CD4-positive, alpha-beta memory T cell (primary cell): ENCODE measurements at regions of chr2 and their contacts with region 1.

Region 1: DNA sequence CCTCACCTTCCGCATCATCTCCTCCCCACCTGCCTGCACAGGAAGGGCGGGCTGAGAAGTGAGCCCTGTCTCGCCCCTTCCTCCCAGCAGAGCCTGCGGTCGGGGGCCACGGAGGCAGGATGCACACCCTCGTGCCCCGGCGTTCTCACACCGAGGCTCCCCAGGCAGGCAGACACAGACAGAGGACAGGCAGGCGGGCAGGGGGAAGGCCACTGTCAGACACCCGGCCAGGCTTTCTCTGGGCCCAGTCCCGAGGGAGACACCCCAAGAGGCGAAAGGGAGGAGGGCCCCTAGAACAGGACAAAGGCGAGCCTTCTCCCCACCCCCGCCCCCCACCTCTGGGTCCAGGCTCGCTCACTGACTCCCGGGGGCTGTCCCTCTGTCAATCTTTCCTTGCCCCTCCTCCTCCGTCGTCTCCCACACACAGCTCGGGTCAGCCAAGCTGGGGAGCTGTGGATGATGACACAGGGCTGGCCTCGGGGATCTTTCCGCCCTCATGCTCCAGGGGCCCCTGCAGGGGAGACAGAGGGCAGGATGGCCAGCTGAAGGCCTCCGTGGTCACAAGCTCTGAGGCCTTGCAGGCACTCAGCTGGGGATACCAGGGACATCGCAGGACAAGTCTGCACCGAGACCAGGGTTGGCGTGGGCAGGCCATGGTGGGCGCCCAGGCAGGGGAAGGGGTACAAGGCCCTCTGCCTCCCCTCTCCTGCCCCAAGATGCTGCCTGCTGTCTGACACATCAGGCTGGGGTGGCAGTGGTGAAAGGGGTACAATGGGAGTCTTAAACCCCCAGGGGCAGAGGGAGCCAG is 24.9 kb downstream of the BIN1 start:
- DNase-seq: peak; percentile 81 to 86 (median 83)
- H3K4me3 ChIP-seq: peak overlapping the region; percentile 91
- H3K4me3 Mint-ChIP-seq: peak overlapping the region; percentile 92 to 96 (median 94)
- H3K27ac ChIP-seq: peak overlapping the region; percentile 83
- H3K27ac Mint-ChIP-seq: peak overlapping the region; percentile 96 to 98 (median 97)
- H3K4me1 ChIP-seq: peaks cover 81% of the 10 kb centered on the region
- H3K4me1 Mint-ChIP-seq: peaks cover 47 to 88% (median 69%) of the 10 kb centered on the region in 4 donors
- H3K27me3 ChIP-seq: no peaks in the 10 kb centered on the region
- H3K27me3 Mint-ChIP-seq: no peaks in the 10 kb centered on the region

Region 2: GRCh38 chr2:127007652-127008051 is 74.4 kb before region 1 on chr2:
- CTCF ChIA-PET with region 1: no interaction called
- POLR2A ChIA-PET with region 1: no interaction called
- intact Hi-C with region 1: no loop called
- DNase-seq: no peak
- H3K4me3 ChIP-seq: no peak overlapping the region
- H3K4me3 Mint-ChIP-seq: no peak overlapping the region
- H3K27ac ChIP-seq: no peak overlapping the region
- H3K27ac Mint-ChIP-seq: no peak overlapping the region
- H3K4me1 ChIP-seq: no peaks in the 10 kb centered on the region
- H3K4me1 Mint-ChIP-seq: no peaks in the 10 kb centered on the region
- H3K27me3 ChIP-seq: no peaks in the 10 kb centered on the region
- H3K27me3 Mint-ChIP-seq: peaks cover 16 to 25% of the 10 kb centered on the region in 2 donors

Region 3: GRCh38 chr2:127025359-127026166 is 56.5 kb before region 1 on chr2:
- CTCF ChIA-PET with region 1: no interaction called
- POLR2A ChIA-PET with region 1: no interaction called
- intact Hi-C with region 1: loop called (anchors 2 kb)
- DNase-seq: peak; percentile 70 to 85 (median 74)
- H3K4me3 ChIP-seq: peak overlapping the region; percentile 24 to 64
- H3K4me3 Mint-ChIP-seq: peak overlapping the region; percentile 89 to 99 (median 92)
- H3K27ac ChIP-seq: no peak overlapping the region
- H3K27ac Mint-ChIP-seq: peak overlapping the region in 6 of 7 donors; percentile 13 to 85 (median 71)
- H3K4me1 ChIP-seq: peaks cover 14% of the 10 kb centered on the region
- H3K4me1 Mint-ChIP-seq: peaks cover 8 to 22% (median 14%) of the 10 kb centered on the region in 4 donors
- H3K27me3 ChIP-seq: peaks cover 6% of the 10 kb centered on the region
- H3K27me3 Mint-ChIP-seq: peaks cover 3 to 16% of the 10 kb centered on the region in 2 donors

Region 4: GRCh38 chr2:127037476-127037875 is 44.6 kb before region 1 on chr2:
- CTCF ChIA-PET with region 1: no interaction called
- POLR2A ChIA-PET with region 1: no interaction called
- intact Hi-C with region 1: no loop called
- DNase-seq: no peak
- H3K4me3 ChIP-seq: no peak overlapping the region
- H3K4me3 Mint-ChIP-seq: no peak overlapping the region
- H3K27ac ChIP-seq: no peak overlapping the region
- H3K27ac Mint-ChIP-seq: no peak overlapping the region
- H3K4me1 ChIP-seq: no peaks in the 10 kb centered on the region
- H3K4me1 Mint-ChIP-seq: peaks cover 0 to 5% (median 0%) of the 10 kb centered on the region in 4 donors
- H3K27me3 ChIP-seq: no peaks in the 10 kb centered on the region
- H3K27me3 Mint-ChIP-seq: peaks cover 0 to 2% of the 10 kb centered on the region in 2 donors

Region 5: DNA sequence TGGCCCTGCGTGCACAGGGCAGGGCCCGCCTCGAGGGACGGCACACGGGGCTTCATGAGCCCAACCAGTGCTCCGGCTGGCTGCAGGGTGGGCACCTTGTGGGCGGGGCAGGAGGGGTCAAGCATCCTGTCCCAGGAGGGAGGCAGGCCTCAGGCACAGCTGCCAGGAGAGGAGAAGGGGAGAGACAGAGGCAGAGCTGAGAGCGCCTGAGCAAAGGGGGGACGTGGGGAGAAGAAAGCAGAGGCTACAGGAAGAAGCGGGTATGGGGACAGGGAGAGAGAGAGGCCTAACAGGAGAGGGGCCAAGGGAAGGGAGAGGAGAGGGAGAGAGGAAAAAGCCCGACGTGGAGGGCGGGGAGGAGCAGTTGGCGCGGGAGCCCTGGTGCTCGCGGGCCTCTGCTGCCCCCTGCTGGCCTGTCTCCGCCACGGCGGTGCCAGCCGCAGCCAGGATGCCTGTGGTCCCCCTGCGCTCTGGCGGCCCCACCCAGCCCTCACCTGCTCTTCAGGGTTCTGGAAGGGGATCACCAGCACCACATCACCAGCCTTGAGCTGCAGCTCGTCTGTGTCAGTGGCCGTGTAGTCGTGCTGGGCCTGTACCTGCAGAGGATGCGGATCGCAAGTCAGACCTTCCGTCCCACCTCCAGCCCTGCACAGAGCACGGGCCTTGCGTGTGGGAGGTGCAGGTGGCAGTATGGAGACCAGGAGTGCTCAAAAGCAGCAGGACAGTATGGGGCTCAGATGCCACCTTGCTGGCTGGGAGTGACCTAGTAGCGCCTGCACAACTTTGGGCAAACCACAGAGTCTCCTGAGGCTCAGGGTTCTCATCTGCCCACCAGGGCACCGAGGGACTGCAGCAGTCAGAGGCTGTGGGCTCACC is 31.9 kb before region 1 on chr2:
- CTCF ChIA-PET with region 1: interaction called, 10 read pairs
- POLR2A ChIA-PET with region 1: interaction called, 3 read pairs
- intact Hi-C with region 1: no loop called
- DNase-seq: peak; percentile 51 to 66 (median 59)
- H3K4me3 ChIP-seq: no peak overlapping the region
- H3K4me3 Mint-ChIP-seq: no peak overlapping the region
- H3K27ac ChIP-seq: no peak overlapping the region
- H3K27ac Mint-ChIP-seq: peak overlapping the region in 4 of 7 donors; percentile 42 to 71 (median 55)
- H3K4me1 ChIP-seq: no peaks in the 10 kb centered on the region
- H3K4me1 Mint-ChIP-seq: peaks cover 0 to 13% (median 4%) of the 10 kb centered on the region in 4 donors
- H3K27me3 ChIP-seq: no peaks in the 10 kb centered on the region
- H3K27me3 Mint-ChIP-seq: no peaks in the 10 kb centered on the region

Region 6: DNA sequence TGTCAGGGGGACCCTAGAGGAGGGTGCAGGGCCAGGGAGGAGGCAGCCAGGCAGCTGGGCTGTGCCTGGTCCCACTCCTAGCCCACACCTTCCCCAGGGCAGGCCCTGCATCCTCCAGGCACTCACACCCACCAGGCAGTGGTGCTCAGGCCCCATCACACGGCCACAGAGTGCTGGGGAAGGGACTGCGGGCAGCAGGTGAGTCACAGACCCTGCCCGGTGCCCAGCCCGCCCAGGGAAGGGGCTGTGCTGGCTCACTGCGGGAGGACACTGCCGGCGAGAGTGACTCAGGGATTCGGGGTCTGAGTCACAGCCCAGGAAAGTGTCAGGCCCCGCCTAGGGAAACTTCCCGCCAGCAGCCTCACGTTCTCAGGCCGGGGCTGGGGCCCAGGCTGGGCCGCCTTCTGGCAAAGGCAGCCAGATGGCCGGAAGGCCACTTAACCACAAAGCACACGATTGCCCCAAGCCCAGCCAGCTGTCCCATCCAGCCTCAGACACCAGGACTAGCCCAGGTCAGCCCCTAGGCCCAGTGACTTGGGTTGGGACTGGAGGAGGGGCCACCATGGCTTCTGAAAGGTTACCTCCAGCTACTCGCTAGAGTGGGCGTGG is 17.3 kb before region 1 on chr2:
- CTCF ChIA-PET with region 1: interaction called, 74 read pairs
- POLR2A ChIA-PET with region 1: interaction called, 72 read pairs
- intact Hi-C with region 1: loop called (anchors 1 kb)
- DNase-seq: peak in 1 of 5 donors; percentile 62
- H3K4me3 ChIP-seq: no peak overlapping the region
- H3K4me3 Mint-ChIP-seq: no peak overlapping the region
- H3K27ac ChIP-seq: peak overlapping the region; percentile 9
- H3K27ac Mint-ChIP-seq: peak overlapping the region in 2 of 7 donors; percentile 35 to 54
- H3K4me1 ChIP-seq: peaks cover 15% of the 10 kb centered on the region
- H3K4me1 Mint-ChIP-seq: peaks cover 6 to 31% (median 16%) of the 10 kb centered on the region in 4 donors
- H3K27me3 ChIP-seq: no peaks in the 10 kb centered on the region
- H3K27me3 Mint-ChIP-seq: no peaks in the 10 kb centered on the region

Region 7: GRCh38 chr2:127106951-127107621 is 25.1 kb after region 1 on chr2 and contains the start of gene BIN1:
- CTCF ChIA-PET with region 1: interaction called, 3 read pairs
- POLR2A ChIA-PET with region 1: interaction called, 23 read pairs
- intact Hi-C with region 1: loop called (anchors 1 kb)
- DNase-seq: peak; percentile 61 to 84 (median 66)
- H3K4me3 ChIP-seq: peak within 1 kb of the TSS; percentile 11 to 51
- H3K4me3 Mint-ChIP-seq: peak within 1 kb of the TSS; percentile 84 to 91 (median 88)
- H3K27ac ChIP-seq: peak within 1 kb of the TSS; percentile 15
- H3K27ac Mint-ChIP-seq: peak within 1 kb of the TSS in 5 of 7 donors; percentile 18 to 86 (median 56)
- H3K4me1 ChIP-seq: peaks cover 21% of the 10 kb centered on the region
- H3K4me1 Mint-ChIP-seq: peaks cover 0 to 12% (median 4%) of the 10 kb centered on the region in 4 donors
- H3K27me3 ChIP-seq: peaks cover 5% of the 10 kb centered on the region
- H3K27me3 Mint-ChIP-seq: peaks cover 6 to 15% of the 10 kb centered on the region in 2 donors
- total RNA-seq, gene BIN1: 99.4 to 103 TPM

Region 8: GRCh38 chr2:127121776-127122176 is 39.7 kb after region 1 on chr2:
- CTCF ChIA-PET with region 1: no interaction called
- POLR2A ChIA-PET with region 1: no interaction called
- intact Hi-C with region 1: no loop called
- DNase-seq: no peak
- H3K4me3 ChIP-seq: no peak overlapping the region
- H3K4me3 Mint-ChIP-seq: no peak overlapping the region
- H3K27ac ChIP-seq: no peak overlapping the region
- H3K27ac Mint-ChIP-seq: no peak overlapping the region
- H3K4me1 ChIP-seq: no peaks in the 10 kb centered on the region
- H3K4me1 Mint-ChIP-seq: no peaks in the 10 kb centered on the region
- H3K27me3 ChIP-seq: no peaks in the 10 kb centered on the region
- H3K27me3 Mint-ChIP-seq: no peaks in the 10 kb centered on the region